Natural killer cell (primary cell): ENCODE measurements at regions of chr1 and their contacts with region 1.

Region 1: DNA sequence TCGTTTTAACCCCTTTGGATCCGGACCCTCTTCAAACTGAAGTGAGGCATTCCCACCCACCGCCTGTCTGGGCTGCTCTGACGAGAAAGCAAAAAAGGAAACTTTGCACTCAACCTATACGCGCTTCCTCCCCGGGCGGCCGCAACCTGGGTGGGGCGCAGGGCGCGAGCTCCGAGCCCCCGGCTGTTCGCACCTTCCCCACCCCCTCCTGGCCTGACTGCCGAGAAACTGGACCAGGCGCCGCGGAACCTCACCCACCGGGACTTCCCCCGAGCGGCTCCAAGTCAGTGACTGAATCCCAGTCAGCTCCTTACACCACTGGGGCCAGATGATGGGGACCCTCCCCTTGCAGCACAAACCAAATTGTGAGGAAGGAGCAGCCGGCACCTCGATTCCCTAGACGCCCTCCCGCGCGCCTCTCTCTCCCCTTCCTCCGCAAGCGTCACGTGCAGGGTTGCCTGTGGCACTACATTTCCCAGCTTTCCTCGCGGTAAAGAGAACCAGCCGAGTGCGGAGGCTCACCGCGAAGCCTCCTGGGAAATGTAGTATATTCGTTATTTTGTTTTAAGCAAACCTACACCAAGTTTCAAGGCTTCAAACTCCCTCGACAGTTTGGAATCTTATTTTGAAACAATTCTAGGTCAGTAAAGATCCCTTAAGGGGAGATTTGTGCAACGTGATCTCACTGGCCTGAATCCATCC is at the start of gene RAB29:
- DNase-seq: peak; percentile 84 to 94
- ATAC-seq: peak; percentile 83 to 94 (median 87)
- H3K4me3 ChIP-seq: peak within 1 kb of the TSS; percentile 96
- H3K4me3 Mint-ChIP-seq: peak within 1 kb of the TSS; percentile 96
- H3K27ac ChIP-seq: peak within 1 kb of the TSS; percentile 100
- H3K27ac Mint-ChIP-seq: peak within 1 kb of the TSS; percentile 98
- H3K4me1 ChIP-seq: peaks cover 36% of the 10 kb centered on the region
- H3K4me1 Mint-ChIP-seq: peaks cover 62 to 63% of the 10 kb centered on the region in 2 donors
- H3K27me3 ChIP-seq: no peaks in the 10 kb centered on the region
- H3K27me3 Mint-ChIP-seq: no peaks in the 10 kb centered on the region
- CTCF ChIP-seq: no peak
- total RNA-seq, gene RAB29: 69.0 to 120 (median 95.1) TPM

Region 2: GRCh38 chr1:205739348-205740160 is 35.6 kb before region 1 on chr1:
- intact Hi-C with region 1: loop called (anchors 5 kb)
- DNase-seq: no peak
- ATAC-seq: no peak
- H3K4me3 ChIP-seq: no peak overlapping the region
- H3K4me3 Mint-ChIP-seq: no peak overlapping the region
- H3K27ac ChIP-seq: no peak overlapping the region
- H3K27ac Mint-ChIP-seq: peak overlapping the region; percentile 8 to 62
- H3K4me1 ChIP-seq: no peaks in the 10 kb centered on the region
- H3K4me1 Mint-ChIP-seq: peaks cover 38 to 39% of the 10 kb centered on the region in 2 donors
- H3K27me3 ChIP-seq: no peaks in the 10 kb centered on the region
- H3K27me3 Mint-ChIP-seq: no peaks in the 10 kb centered on the region
- CTCF ChIP-seq: no peak

Region 3: DNA sequence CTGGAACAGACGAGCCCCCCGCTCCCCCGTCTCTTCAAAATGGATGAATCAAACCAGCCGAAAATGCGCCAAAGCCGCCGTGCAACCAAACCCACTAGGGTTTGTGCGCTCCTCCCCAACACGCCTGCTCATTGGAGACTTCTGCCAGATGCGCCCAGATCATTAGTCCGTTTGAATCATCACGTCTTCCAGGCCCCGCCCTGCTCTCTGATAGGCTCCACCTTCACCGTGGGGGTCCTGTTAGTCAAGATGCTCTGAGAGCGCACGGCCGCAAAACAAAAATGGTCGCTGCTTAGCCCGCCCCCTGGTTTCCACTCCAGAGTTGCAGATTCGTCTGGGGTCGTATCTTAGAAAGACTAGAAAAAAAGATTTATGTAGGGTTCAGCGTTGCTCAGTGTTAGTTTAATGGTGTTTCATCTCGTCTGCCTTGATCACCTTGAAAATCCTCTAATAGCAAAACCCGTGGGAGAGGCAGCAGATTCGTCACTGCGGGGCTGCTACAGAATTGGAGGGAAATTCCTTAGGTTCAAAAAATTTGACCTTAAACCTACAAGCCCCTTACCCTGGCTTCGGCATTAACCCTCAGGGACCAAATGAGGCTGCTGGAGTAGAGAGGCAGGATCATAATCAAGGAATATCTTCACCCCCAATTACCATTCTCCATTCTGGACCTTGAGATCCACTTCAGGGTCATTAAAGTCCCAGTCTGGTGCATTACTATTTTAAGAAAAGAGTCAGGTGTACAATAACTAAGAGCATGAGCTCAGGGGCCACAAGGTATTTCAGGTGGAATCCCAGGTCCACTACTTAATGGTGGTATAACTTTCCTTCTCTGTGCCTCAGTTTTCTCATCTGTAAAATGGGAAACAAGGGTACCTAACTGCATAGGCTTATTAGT is 24.8 kb before region 1 on chr1 and contains the start of gene NUCKS1:
- intact Hi-C with region 1: loop called (anchors 1 kb)
- DNase-seq: peak; percentile 93 to 99
- ATAC-seq: peak; percentile 74 to 87 (median 77)
- H3K4me3 ChIP-seq: peak within 1 kb of the TSS; percentile 70
- H3K4me3 Mint-ChIP-seq: peak within 1 kb of the TSS; percentile 100
- H3K27ac ChIP-seq: peak within 1 kb of the TSS; percentile 86
- H3K27ac Mint-ChIP-seq: peak within 1 kb of the TSS; percentile 90 to 97
- H3K4me1 ChIP-seq: peaks cover 7% of the 10 kb centered on the region
- H3K4me1 Mint-ChIP-seq: peaks cover 26 to 35% of the 10 kb centered on the region in 2 donors
- H3K27me3 ChIP-seq: no peaks in the 10 kb centered on the region
- H3K27me3 Mint-ChIP-seq: no peaks in the 10 kb centered on the region
- CTCF ChIP-seq: no peak
- total RNA-seq, gene NUCKS1: 89.2 to 113 (median 103) TPM

Region 4: DNA sequence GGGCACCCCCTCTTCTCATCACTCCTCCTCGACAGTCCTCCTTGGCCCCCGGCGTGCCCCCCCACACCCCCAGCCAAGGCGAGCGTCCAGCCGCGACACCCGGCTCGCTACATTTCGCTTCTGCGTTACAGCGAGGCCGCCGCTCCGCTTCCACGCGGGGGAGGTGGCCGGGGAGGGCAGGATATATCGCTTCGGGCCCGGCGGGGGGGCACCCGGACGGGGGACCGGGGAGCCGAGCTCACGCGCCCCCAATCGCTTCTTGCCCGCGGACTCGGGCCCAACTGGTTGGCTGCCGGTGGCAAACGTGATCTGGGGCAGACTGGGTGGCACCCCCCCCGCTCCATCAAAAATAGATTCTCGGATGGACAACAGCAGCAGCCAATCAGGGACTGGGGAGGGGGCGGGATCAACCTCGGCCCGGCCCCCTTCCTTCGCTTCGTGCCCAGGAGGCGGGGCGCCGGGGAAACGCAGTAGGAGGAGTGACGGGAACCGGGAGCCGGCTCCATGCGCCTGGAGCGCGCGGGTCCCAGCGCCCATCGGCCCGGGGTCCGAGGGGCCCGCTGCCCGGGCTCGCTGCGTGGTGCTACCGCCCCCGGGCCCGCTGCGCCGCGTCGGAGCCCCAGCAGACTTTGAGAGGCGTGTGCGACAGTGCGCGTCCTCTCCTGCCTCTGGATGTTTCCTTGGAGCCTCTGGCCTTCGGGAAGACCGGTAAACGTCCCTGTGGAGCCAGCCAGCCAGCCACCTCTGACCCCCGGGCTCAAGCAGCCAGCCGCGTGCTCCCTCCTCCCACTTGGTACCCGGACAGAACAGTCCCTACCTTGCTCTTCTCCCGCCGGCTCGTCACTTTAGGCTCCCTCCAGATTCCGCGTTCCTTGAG is 38.0 kb after region 1 on chr1 and contains the start of gene SLC41A1:
- intact Hi-C with region 1: loop called (anchors 1 kb)
- DNase-seq: peak; percentile 88 to 96
- ATAC-seq: peak; percentile 93 to 98 (median 95)
- H3K4me3 ChIP-seq: peak within 1 kb of the TSS; percentile 91
- H3K4me3 Mint-ChIP-seq: peak within 1 kb of the TSS; percentile 91
- H3K27ac ChIP-seq: peak within 1 kb of the TSS; percentile 67
- H3K27ac Mint-ChIP-seq: peak within 1 kb of the TSS; percentile 85 to 88
- H3K4me1 ChIP-seq: peaks cover 37% of the 10 kb centered on the region
- H3K4me1 Mint-ChIP-seq: peaks cover 52 to 53% of the 10 kb centered on the region in 2 donors
- H3K27me3 ChIP-seq: no peaks in the 10 kb centered on the region
- H3K27me3 Mint-ChIP-seq: no peaks in the 10 kb centered on the region
- CTCF ChIP-seq: no peak
- total RNA-seq, gene SLC41A1: 35.3 to 47.1 (median 39.5) TPM